T-cell (primary cell): ENCODE measurements at regions of chr10 and their contacts with region 1.

Region 1: DNA sequence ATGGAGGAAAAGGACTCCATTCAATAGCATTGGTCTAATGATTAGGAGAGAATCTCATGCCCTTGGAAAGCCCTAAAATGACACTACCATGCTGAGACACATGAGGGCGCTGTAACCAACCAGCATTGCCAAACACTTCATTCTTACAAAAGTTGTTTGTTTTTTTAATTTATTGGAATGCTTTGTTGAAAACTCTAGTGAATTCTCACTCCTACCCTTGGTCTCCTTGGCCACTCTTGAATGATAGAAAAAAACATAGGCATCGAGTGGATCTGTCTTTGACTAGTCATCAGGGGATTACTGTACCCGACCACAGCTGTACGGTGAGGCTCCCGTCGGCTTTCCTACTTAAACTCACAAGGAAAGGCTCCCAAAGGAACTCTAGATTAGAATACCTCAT is 29.3 kb upstream of the ADD3 start:
- DNase-seq: peak; percentile 18 to 80 (median 53)
- ATAC-seq: peak in 3 of 4 experiments; percentile 40 to 53 (median 46)
- H3K4me3 ChIP-seq: no peak overlapping the region
- H3K4me3 Mint-ChIP-seq: no peak overlapping the region
- H3K27ac ChIP-seq: no peak overlapping the region
- H3K27ac Mint-ChIP-seq: no peak overlapping the region
- H3K4me1 ChIP-seq: peaks cover 2 to 3% of the 10 kb centered on the region in 2 experiments
- H3K4me1 Mint-ChIP-seq: peaks cover 11 to 15% (median 11%) of the 10 kb centered on the region in 3 donors
- H3K27me3 ChIP-seq: no peaks in the 10 kb centered on the region
- H3K27me3 Mint-ChIP-seq: no peaks in the 10 kb centered on the region

Region 2: DNA sequence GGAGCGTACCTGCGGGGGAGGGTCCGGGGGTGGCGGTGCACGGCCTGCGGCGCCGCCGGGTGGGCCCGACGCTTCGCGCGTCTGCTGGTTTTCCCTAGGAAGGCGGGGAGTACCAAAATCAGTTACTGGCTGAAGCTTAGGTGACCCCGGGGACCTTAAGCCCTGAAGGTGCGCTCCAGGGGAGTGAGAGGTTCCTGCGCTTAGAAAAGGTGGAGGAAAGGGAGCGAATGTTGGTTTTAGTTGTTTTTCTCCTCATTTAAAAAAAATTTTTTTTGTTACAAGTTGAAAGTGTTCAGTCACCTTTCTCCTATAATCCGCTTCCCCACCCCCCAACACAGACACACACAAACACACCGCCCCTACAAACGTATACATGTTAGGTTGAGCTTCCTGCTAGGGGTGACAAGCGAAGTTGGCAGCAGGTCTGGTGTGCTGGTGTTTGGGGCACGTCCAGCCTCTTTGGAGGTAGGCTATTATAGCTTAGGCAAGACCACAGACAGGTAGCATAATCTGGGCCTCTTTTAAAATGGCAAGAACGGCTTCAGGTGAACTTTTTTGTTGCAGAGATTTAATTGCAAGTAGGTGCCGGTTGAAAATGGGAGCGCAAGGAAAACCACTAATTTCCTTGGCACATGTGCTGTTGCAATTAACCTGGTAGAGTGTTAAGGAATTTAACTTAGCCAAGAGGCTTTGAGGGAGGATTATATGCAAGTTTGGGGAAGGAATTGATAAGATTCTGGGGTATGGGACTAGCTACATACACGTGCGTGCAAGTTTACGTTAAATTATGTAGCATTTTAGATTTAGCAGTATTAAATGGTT is 30.2 kb after region 1 on chr10:
- CTCF ChIA-PET with region 1: interaction called, 3 to 11 read pairs
- POLR2A ChIA-PET with region 1: interaction called in 1 of 2 experiments, 3 read pairs
- DNase-seq: peak; percentile 28 to 68 (median 48)
- ATAC-seq: peak in 2 of 4 experiments; percentile 12
- H3K4me3 ChIP-seq: peak overlapping the region; percentile 85 to 88
- H3K4me3 Mint-ChIP-seq: no peak overlapping the region
- H3K27ac ChIP-seq: peak overlapping the region; percentile 64
- H3K27ac Mint-ChIP-seq: peak overlapping the region; percentile 96 to 99
- H3K4me1 ChIP-seq: peaks cover 27 to 45% of the 10 kb centered on the region in 2 experiments
- H3K4me1 Mint-ChIP-seq: peaks cover 47 to 53% (median 50%) of the 10 kb centered on the region in 3 donors
- H3K27me3 ChIP-seq: no peaks in the 10 kb centered on the region
- H3K27me3 Mint-ChIP-seq: no peaks in the 10 kb centered on the region

Region 3: GRCh38 chr10:110446954-110447608 is 468.6 kb after region 1 on chr10:
- CTCF ChIA-PET with region 1: no interaction called
- POLR2A ChIA-PET with region 1: no interaction called
- DNase-seq: no peak
- ATAC-seq: no peak
- H3K4me3 ChIP-seq: no peak overlapping the region
- H3K4me3 Mint-ChIP-seq: no peak overlapping the region
- H3K27ac ChIP-seq: no peak overlapping the region
- H3K27ac Mint-ChIP-seq: no peak overlapping the region
- H3K4me1 ChIP-seq: peaks cover 0 to 1% of the 10 kb centered on the region in 2 experiments
- H3K4me1 Mint-ChIP-seq: peaks cover 1 to 4% (median 2%) of the 10 kb centered on the region in 3 donors
- H3K27me3 ChIP-seq: peaks cover 0 to 6% of the 10 kb centered on the region in 2 experiments
- H3K27me3 Mint-ChIP-seq: peaks cover 0 to 8% of the 10 kb centered on the region in 2 donors